Body of pancreas (tissue), 4 donors: ENCODE measurements at regions of chr22 and their contacts with region 1.

Region 1: DNA sequence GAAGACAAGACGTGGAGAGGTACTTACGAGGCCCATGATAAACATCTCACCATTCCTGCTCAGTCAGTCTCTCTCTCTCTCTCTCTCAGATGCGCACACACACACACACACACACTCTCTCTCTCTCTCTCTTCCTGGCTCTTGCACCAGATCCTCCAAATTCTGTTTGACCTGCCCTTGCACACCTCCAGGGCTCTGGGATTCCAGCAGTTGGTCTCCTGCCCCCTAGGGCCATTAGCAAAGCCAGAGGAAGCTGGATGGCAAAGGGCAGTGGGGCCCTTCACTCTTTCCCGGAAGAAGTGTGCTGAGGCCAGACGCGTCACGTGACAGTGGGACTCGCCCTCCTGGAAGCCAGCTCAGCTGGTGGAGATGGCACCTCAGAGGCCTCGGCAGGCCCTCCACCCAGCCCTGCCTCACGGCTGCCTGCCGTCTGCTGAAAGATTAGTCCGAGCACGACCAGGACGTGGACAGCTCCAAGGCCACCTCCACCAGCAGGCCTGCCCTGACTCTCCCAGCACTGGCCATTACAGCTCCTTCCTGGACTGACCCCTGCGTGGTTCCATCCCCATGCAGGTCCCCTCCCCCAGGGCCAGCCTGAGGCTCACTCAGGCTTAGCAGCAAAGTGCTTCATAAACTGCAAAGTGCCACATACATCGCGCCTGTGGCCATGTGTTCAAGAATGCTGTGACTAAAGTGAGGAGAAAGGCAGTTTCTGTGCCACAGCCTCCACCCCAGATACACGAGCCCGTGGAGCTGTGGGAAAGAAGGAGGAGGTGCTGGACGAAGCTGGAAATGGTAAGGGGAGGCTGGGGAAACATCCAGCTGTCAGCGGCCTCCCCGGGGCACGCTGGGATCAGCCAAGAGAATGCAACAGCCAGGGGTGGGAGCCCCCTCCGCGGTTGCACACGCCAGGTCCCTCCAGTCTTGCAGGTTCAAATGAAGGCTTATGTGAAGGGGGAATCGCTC is 3.7 kb downstream of the PDGFB start:
- DNase-seq: peak; percentile 64 to 85 (median 80)
- ATAC-seq: peak; percentile 15
- H3K4me3 ChIP-seq: no peak overlapping the region
- H3K27ac ChIP-seq: peak overlapping the region; percentile 68 to 87 (median 80)
- H3K4me1 ChIP-seq: peaks cover 76% of the 10 kb centered on the region
- H3K27me3 ChIP-seq: no peaks in the 10 kb centered on the region
- CTCF ChIP-seq: peak in 3 of 7 experiments; percentile 7 to 14 (median 9)
- POLR2A ChIP-seq: peak; percentile 19 to 43 (median 35)

Region 2: DNA sequence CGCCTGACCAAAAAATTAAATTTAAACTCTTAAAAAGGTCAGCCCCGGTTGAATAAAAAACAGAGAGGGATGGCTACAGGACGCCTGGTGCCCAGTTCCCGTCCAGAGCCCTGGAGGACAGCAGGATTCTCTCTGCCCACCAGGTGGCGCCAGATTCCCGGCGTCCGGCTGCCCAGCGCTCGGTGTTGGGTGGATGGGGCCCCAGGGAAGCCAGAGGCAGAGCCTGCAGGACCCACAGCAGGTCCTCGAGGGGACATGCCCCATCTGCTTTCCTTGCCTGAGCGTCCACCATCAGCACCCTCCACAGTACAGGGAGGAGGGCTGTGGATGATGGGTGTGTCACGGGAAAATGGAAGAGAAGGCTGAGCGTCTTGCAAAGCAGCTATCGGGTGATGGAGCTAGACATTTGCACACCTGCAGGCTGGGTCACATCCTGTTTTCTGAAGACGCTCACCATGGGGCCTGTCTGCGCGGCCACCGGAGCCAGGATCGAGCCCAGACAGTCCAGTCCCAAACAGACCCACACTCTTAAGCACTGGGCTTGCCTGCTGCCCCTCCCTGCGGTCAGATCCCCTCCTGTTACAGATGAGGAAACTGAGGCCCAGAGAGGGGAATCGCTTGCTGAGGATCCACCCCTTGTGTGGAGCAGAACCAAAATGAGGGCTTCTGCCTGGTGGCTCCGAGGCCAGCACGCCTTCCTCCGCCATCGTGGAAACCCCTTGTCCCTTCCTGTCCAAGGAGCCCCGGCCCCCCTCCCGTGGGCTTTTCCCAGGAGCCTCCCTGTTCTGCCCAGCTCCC is 70.1 kb before region 1 on chr22:
- intact Hi-C with region 1: loop called (anchors 5 kb)
- DNase-seq: peak; percentile 80 to 88 (median 86)
- ATAC-seq: peak; percentile 79
- H3K4me3 ChIP-seq: no peak overlapping the region
- H3K27ac ChIP-seq: no peak overlapping the region
- H3K4me1 ChIP-seq: peaks cover 37% of the 10 kb centered on the region
- H3K27me3 ChIP-seq: no peaks in the 10 kb centered on the region
- CTCF ChIP-seq: peak; percentile 90 to 97 (median 96)
- POLR2A ChIP-seq: no peak

Region 3: GRCh38 chr22:39300186-39300830 is 59.2 kb after region 1 on chr22:
- intact Hi-C with region 1: loop called (anchors 5 kb)
- DNase-seq: peak in 1 of 4 donors; percentile 75
- ATAC-seq: no peak
- H3K4me3 ChIP-seq: no peak overlapping the region
- H3K27ac ChIP-seq: peak overlapping the region in 2 of 4 donors; percentile 45 to 66
- H3K4me1 ChIP-seq: peaks cover 57% of the 10 kb centered on the region
- H3K27me3 ChIP-seq: no peaks in the 10 kb centered on the region
- CTCF ChIP-seq: no peak
- POLR2A ChIP-seq: peak in 1 of 3 donors; percentile 21

Region 4: GRCh38 chr22:39309881-39310714 is 69.0 kb after region 1 on chr22:
- intact Hi-C with region 1: loop called (anchors 5 kb)
- DNase-seq: no peak
- ATAC-seq: no peak
- H3K4me3 ChIP-seq: no peak overlapping the region
- H3K27ac ChIP-seq: peak overlapping the region in 1 of 4 donors; percentile 1
- H3K4me1 ChIP-seq: peaks cover 17% of the 10 kb centered on the region
- H3K27me3 ChIP-seq: no peaks in the 10 kb centered on the region
- CTCF ChIP-seq: no peak
- POLR2A ChIP-seq: no peak